ENCODE measurements at regions of chr15 and their contacts with region 1.

Region 1: DNA sequence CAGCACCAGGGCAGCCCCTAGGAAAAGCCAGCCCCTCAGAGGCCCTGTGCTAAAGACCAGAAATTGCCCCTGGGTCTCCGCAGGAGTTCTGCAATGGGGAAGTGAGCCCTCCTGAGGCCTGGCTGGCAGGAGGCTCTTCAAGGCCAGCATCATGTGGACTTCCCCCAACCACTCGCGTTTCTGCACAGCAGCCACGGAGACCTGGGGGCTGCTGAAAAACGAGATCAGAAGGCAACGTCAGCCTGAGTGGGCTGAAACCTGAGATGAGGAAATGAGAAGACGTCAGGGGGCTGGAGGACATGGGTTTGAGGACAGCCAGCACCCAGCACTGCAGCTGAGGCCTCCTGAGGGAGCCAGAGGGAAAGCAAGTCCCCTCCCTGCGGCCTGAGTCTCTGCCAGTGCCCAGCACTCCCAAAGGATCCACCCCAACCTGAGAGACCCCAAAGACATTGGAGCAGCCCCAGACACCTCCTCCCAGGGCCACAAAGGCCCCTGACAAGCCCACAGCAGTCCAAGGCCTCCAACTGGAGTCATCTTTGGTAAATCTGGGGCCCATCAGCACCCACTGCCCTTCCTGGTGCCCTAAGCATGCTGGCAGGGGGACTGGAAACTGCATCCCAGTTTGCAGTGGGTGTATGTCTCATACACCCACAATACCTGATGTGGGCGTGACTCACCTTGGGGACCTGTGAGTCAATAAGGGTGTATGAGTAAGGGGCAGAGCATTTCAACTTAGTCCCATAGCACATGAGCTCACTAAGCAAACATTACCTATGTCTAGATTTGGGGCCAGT is 29.2 kb upstream of the CYP11A1 start:
- DNase-seq: peak; percentile 98
- H3K4me3 ChIP-seq: no peak overlapping the region
- H3K27ac ChIP-seq: peak overlapping the region; percentile 82
- H3K4me1 ChIP-seq: peaks cover 63% of the 10 kb centered on the region
- H3K27me3 ChIP-seq: no peaks in the 10 kb centered on the region
- CTCF ChIP-seq: no peak

Region 2: GRCh38 chr15:74407055-74407691 is 10.5 kb after region 1 on chr15:
- CTCF ChIA-PET with region 1: no interaction called
- dilution Hi-C with region 1: no loop called
- in situ Hi-C with region 1: no loop called
- intact Hi-C with region 1: loop called (anchors 1 kb)
- DNase-seq: peak; percentile 88
- H3K4me3 ChIP-seq: no peak overlapping the region
- H3K27ac ChIP-seq: peak overlapping the region; percentile 56
- H3K4me1 ChIP-seq: peaks cover 30% of the 10 kb centered on the region
- H3K27me3 ChIP-seq: no peaks in the 10 kb centered on the region
- CTCF ChIP-seq: peak in 1 of 2 donors; percentile 17

Region 3: DNA sequence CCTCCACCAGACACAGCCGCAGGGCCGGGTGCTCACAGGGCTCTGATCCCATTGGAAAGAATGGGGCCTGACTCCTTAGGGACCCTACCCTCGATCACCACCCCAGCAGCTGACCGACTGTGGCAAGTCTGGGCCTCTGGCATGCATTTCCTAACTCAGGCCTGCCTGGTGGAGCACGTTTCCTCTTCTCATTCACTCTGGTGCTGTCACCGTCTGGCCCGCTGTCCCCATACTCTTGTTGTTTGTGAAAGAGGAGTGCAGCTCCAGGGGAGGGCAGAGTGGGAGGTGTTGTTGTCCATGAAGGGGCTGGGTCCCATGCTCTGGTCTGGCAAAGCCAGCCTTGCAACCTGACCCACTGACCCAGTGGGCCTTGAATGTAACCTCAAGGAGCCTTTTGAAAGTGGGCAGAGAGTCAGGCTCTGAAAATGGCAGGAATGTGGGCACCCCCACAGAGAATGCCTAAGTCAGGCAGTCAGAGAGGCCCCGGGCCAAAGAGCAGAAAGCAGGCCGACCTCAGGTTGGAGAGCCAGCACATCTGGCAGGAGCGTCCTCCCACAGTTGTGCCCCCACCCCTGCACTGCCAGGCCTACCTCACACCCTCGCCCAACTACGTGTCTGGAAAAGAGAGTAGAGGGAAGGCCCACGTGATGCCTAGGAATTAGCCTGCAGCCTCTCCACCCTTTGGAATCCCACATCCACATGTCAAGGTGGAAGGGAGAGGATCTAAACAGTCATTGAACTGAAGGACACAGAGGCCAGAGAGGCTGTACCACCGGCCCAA is 26.2 kb after region 1 on chr15:
- CTCF ChIA-PET with region 1: no interaction called
- dilution Hi-C with region 1: no loop called
- in situ Hi-C with region 1: no loop called
- intact Hi-C with region 1: loop called (anchors 1 kb)
- DNase-seq: peak; percentile 83
- H3K4me3 ChIP-seq: no peak overlapping the region
- H3K27ac ChIP-seq: peak overlapping the region; percentile 87
- H3K4me1 ChIP-seq: peaks cover 72% of the 10 kb centered on the region
- H3K27me3 ChIP-seq: no peaks in the 10 kb centered on the region
- CTCF ChIP-seq: no peak

Region 4: DNA sequence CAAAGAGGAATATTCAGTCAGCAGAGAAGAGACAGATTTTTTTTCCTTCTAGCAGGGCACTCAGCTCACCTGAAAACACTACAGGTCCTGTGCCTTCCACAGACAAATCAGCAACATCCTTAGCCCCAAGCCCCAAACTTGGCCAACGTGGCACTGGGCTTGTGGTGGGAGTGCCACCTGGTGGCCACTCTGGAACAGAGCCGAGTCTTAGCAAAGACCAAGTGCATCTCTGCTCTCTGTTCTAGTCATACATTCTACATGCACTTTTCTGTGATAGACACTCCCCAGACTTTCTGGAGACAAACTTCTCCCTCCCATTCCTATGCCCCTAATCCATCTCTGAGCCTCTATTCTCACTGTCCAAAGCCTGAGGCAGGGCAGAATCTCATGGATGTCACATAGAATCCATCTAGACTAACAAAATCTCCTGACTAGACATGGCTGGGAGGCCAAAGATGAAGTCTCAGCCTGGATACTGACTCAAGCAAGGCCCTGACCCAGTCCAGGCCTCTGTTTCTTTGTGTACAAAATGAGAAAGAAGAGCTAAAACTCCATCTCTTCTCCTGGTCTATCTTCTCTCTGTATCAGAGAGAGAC is 42.2 kb after region 1 on chr15:
- CTCF ChIA-PET with region 1: no interaction called
- dilution Hi-C with region 1: no loop called
- in situ Hi-C with region 1: no loop called
- intact Hi-C with region 1: no loop called
- DNase-seq: peak; percentile 73
- H3K4me3 ChIP-seq: no peak overlapping the region
- H3K27ac ChIP-seq: no peak overlapping the region
- H3K4me1 ChIP-seq: peaks cover 4% of the 10 kb centered on the region
- H3K27me3 ChIP-seq: no peaks in the 10 kb centered on the region
- CTCF ChIP-seq: peak; percentile 97 to 98

Measured in mammary epithelial cell (primary cell).